CD4-positive, alpha-beta T cell (primary cell): ENCODE measurements at regions of chr11 and their contacts with region 1.

Region 1: GRCh38 chr11:87966694-87967093 is 208.5 kb downstream of the RAB38 start:
- DNase-seq: no peak
- ATAC-seq: no peak
- H3K4me3 ChIP-seq: no peak overlapping the region
- H3K4me3 Mint-ChIP-seq: no peak overlapping the region
- H3K27ac ChIP-seq: no peak overlapping the region
- H3K27ac Mint-ChIP-seq: no peak overlapping the region
- H3K4me1 ChIP-seq: no peaks in the 10 kb centered on the region
- H3K4me1 Mint-ChIP-seq: no peaks in the 10 kb centered on the region
- H3K27me3 ChIP-seq: no peaks in the 10 kb centered on the region
- H3K27me3 Mint-ChIP-seq: peaks cover 8% of the 10 kb centered on the region
- CTCF ChIP-seq: no peak

Region 2: GRCh38 chr11:88016392-88017170 is 49.9 kb after region 1 on chr11:
- CTCF ChIA-PET with region 1: no interaction called
- POLR2A ChIA-PET with region 1: no interaction called
- intact Hi-C with region 1: loop called in 1 of 2 experiments (anchors 2 kb)
- DNase-seq: peak; percentile 3 to 74 (median 38)
- ATAC-seq: peak; percentile 48
- H3K4me3 ChIP-seq: no peak overlapping the region
- H3K4me3 Mint-ChIP-seq: no peak overlapping the region
- H3K27ac ChIP-seq: no peak overlapping the region
- H3K27ac Mint-ChIP-seq: no peak overlapping the region
- H3K4me1 ChIP-seq: no peaks in the 10 kb centered on the region
- H3K4me1 Mint-ChIP-seq: no peaks in the 10 kb centered on the region
- H3K27me3 ChIP-seq: no peaks in the 10 kb centered on the region
- H3K27me3 Mint-ChIP-seq: peaks cover 3% of the 10 kb centered on the region
- CTCF ChIP-seq: peak; percentile 69